ENCODE measurements at regions of chr1 and their contacts with region 1.

Region 1: GRCh38 chr1:111399792-111400610 is 27.5 kb downstream of the OVGP1 start:
- DNase-seq: peak; percentile 41
- CTCF ChIP-seq: peak; percentile 66

Region 2: GRCh38 chr1:111214074-111214801 is 185.8 kb before region 1 on chr1:
- CTCF ChIA-PET with region 1: interaction called, 11 read pairs
- POLR2A ChIA-PET with region 1: no interaction called
- DNase-seq: no peak
- CTCF ChIP-seq: no peak

Region 3: GRCh38 chr1:111222308-111223125 is 177.5 kb before region 1 on chr1:
- CTCF ChIA-PET with region 1: interaction called, 44 read pairs
- POLR2A ChIA-PET with region 1: no interaction called
- DNase-seq: peak; percentile 68
- CTCF ChIP-seq: peak; percentile 82

Region 4: DNA sequence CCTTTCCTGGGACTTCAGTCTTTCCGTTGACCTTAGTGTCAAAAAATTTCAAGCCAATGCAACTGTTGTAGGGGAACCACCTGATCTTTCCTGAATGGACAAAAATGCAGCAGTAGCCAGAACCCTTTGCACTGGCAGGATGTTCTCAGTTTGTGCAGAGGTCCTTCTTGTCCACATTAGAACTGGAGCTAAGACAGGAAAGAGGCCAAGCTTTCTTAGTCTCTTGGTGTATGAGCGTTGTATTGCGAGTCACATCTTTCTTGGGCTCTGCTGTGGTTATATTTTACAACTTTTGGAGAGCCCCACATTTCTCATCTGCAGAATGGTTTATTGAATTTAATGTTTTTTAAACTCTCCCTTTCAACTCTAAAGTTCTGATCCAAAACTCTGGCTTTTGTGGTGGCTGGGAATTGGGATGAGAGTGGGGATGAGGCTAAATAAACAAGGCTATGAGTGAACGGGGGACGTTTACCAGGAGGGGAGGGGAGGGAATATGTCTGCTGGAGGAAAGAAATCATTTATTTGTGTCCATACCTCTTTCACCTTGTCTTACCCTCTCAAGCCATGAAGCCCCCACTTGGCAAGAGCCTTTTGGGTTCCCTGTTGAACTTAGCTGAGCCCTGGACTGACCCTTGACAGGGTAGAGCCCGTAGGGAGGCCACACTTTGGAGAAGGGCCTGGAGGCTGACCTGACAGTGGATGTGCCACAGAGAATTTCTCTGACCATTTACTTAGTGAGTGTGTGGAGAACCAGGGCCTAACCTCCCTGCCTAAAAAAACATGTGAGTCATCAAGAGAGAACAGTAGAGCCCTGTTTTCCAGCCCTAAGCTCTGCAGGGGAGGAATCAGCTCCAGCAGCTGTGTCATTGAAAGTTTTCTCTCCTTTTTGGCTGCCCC is 171.9 kb before region 1 on chr1:
- CTCF ChIA-PET with region 1: interaction called, 44 read pairs
- POLR2A ChIA-PET with region 1: no interaction called
- DNase-seq: no peak
- CTCF ChIP-seq: no peak

Region 5: DNA sequence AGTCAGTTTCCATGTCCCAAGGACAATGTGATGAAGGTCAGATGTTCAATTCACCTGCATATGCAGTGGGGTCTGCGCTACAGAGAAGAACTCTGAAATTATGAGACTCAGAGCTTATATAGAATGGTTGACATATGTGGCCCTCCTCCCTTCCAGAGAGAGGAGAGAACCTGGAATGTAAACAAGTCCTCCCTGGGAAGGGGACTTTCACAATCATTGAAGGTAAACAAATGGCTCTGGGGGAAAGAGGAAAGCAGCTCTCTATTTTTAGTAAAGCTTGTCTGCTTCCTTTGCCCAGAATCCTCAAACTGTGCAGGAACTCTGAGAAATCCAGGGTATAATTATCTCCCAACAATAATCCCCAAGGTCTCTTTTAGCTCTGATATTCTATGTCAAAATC is 17.8 kb after region 1 on chr1:
- CTCF ChIA-PET with region 1: interaction called, 20 read pairs
- POLR2A ChIA-PET with region 1: no interaction called
- DNase-seq: no peak
- CTCF ChIP-seq: no peak